GM12878 (cell line): ENCODE measurements at regions of chr20 and their contacts with region 1.

Region 1: GRCh38 chr20:50085452-50086365 is 27.2 kb downstream of the UBE2V1 start:
- DNase-seq: no peak
- ATAC-seq: peak; percentile 95
- H3K4me3 ChIP-seq: no peak overlapping the region
- H3K27ac ChIP-seq: peak overlapping the region; percentile 26; the same call in 1 of the 2 replicates
- H3K4me1 ChIP-seq: peaks cover 6% of the 10 kb centered on the region
- H3K27me3 ChIP-seq: no peaks in the 10 kb centered on the region
- CTCF ChIP-seq: peak; percentile 77 to 91 (median 82)
- EP300 ChIP-seq: no peak
- POLR2A ChIP-seq: 0 out of 2 replicates have a peak, but pooled peaks have one; percentile 11
- RAD21 ChIP-seq: peak; percentile 62

Region 2: GRCh38 chr20:49982346-49983122 is 103.2 kb before region 1 on chr20 and contains the start of gene SNAI1:
- CTCF ChIA-PET with region 1: interaction called, 52 read pairs
- POLR2A ChIA-PET with region 1: no interaction called
- RAD21 ChIA-PET with region 1: no interaction called
- SMC1A ChIA-PET with region 1: interaction called, 5 read pairs
- in situ Hi-C with region 1: no loop called
- intact Hi-C with region 1: no loop called
- DNase-seq: peak; percentile 32
- ATAC-seq: peak; percentile 96
- H3K4me3 ChIP-seq: peak within 1 kb of the TSS; percentile 58
- H3K27ac ChIP-seq: no peak within 1 kb of the TSS
- H3K4me1 ChIP-seq: no peaks in the 10 kb centered on the region; the same call in 1 of the 2 replicates
- H3K27me3 ChIP-seq: no peaks in the 10 kb centered on the region
- CTCF ChIP-seq: peak; percentile 40 to 51 (median 42); a peak in 5 of 6 replicates
- EP300 ChIP-seq: no peak
- POLR2A ChIP-seq: peak; percentile 97
- RAD21 ChIP-seq: no peak
- polyA plus RNA-seq, gene SNAI1: not detected

Region 3: DNA sequence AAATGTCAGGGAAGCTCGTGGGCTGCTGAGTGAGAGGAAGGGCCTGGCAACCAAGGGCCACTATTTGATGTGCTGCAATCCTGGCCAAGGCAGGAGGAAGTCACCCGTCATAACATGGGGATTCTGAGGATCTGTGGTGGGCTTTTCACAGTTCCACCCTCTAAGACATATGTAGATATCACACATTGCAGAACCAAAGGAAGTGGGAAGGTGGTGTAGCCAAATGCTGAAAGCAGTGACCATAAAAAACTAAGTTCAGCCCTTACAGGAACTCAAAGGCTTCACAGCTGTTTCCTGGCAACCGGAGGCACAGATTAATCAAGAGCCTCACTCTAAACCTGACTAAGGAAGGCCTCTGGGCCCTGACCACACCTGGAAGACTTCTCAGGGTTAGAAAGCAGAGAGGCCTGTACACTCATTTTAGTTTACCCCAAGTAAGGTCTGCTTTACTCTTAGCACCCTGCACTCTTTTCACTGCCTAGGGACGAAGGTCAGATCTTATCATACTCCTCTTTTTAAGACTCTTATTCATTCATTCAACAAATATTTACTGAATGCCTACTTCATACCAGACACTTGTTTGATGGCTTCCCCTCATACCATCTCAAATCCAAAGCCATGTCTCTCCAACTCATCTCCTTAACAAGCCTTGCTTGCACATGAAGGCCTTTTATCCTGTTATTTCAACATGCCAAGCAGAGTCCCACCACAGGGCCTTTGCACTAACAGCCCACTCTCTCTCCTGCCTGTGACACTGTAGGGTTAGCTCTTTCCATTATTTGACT is 24.6 kb after region 1 on chr20:
- CTCF ChIA-PET with region 1: interaction called, 21 read pairs
- POLR2A ChIA-PET with region 1: interaction called, 6 read pairs
- RAD21 ChIA-PET with region 1: no interaction called
- SMC1A ChIA-PET with region 1: interaction called, 5 read pairs
- in situ Hi-C with region 1: no loop called
- intact Hi-C with region 1: no loop called
- DNase-seq: peak; percentile 52
- ATAC-seq: peak; percentile 55
- H3K4me3 ChIP-seq: peak overlapping the region; percentile 93
- H3K27ac ChIP-seq: peak overlapping the region; percentile 87
- H3K4me1 ChIP-seq: peaks cover 44% of the 10 kb centered on the region
- H3K27me3 ChIP-seq: no peaks in the 10 kb centered on the region
- CTCF ChIP-seq: no peak
- EP300 ChIP-seq: no peak
- POLR2A ChIP-seq: no peak
- RAD21 ChIP-seq: no peak

Region 4: DNA sequence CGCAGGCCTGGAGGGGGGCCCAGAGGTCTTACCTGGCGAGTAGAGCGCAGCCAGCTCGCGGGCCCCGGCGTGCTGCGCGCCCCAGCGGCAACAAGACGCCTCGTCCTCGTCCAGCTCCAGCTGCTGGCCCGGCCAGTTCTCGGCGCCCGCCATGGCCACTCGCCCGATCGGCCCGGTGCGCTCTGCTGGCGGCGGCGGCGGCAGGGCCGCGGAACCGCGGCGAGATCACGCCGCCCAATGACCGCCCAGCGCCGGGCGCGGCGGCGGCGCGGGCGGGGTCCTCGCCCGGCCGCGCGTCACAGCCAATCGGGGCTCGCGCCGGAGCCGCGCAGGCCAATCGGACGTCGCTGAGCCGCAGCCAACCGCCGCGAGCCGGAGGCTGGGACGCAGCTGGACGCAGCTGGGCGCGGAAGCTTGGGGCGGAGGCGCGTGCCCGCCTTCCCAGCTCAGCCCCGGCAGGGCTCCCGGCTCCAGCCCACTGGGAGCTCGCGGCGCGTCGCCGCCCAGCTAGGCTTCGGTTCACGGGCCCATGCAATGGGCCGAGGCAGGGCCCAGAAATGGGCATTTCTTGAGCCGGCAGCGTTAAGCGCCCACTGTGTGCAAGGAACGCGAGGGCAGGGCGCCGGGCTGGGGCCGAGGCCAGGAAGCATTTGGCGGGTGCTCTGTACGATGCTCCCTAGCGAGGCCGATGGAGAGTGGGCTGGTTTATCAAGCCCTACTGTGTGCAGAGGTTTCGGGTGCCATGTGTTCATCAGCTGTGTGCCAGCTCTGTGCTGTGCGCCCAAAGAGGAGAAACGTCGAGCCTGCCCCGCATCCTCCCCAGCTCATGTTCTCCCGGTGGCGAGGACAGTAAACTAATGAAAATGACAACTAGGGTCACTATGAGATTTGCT is 68.0 kb after region 1 on chr20 and contains the start of gene PEDS1:
- CTCF ChIA-PET with region 1: interaction called, 18 read pairs
- POLR2A ChIA-PET with region 1: no interaction called
- RAD21 ChIA-PET with region 1: interaction called, 5 read pairs
- SMC1A ChIA-PET with region 1: interaction called, 3 read pairs
- in situ Hi-C with region 1: no loop called
- intact Hi-C with region 1: no loop called
- DNase-seq: peak; percentile 45
- ATAC-seq: peak; percentile 98
- H3K4me3 ChIP-seq: peak within 1 kb of the TSS; percentile 98
- H3K27ac ChIP-seq: peak within 1 kb of the TSS; percentile 75
- H3K4me1 ChIP-seq: peaks cover 8% of the 10 kb centered on the region
- H3K27me3 ChIP-seq: no peaks in the 10 kb centered on the region
- CTCF ChIP-seq: no peak
- EP300 ChIP-seq: 0 out of 4 replicates have a peak, but pooled peaks of 1 of the 2 experiments have one; percentile 17
- POLR2A ChIP-seq: peak; percentile 94
- RAD21 ChIP-seq: no peak
- polyA plus RNA-seq, gene PEDS1: 1.7 to 4.3 TPM

Region 5: GRCh38 chr20:50312682-50313189 is 227.0 kb after region 1 on chr20:
- CTCF ChIA-PET with region 1: no interaction called
- POLR2A ChIA-PET with region 1: no interaction called
- RAD21 ChIA-PET with region 1: no interaction called
- SMC1A ChIA-PET with region 1: no interaction called
- in situ Hi-C with region 1: no loop called
- intact Hi-C with region 1: no loop called
- DNase-seq: no peak
- ATAC-seq: no peak
- H3K4me3 ChIP-seq: no peak overlapping the region
- H3K27ac ChIP-seq: no peak overlapping the region
- H3K4me1 ChIP-seq: no peaks in the 10 kb centered on the region
- H3K27me3 ChIP-seq: peaks cover 0 to 3% of the 10 kb centered on the region in 2 experiments; a peak in 2 of 4 replicates
- CTCF ChIP-seq: no peak
- EP300 ChIP-seq: no peak
- POLR2A ChIP-seq: no peak
- RAD21 ChIP-seq: no peak